ENCODE measurements at regions of chr12 and their contacts with region 1.

Region 1: GRCh38 chr12:12562585-12563261 is at the start of gene DUSP16:
- DNase-seq: peak; percentile 85
- H3K4me3 Mint-ChIP-seq: peak within 1 kb of the TSS; percentile 88
- H3K27ac Mint-ChIP-seq: peak within 1 kb of the TSS; percentile 97
- H3K4me1 Mint-ChIP-seq: peaks cover 52% of the 10 kb centered on the region
- H3K27me3 Mint-ChIP-seq: no peaks in the 10 kb centered on the region
- total RNA-seq, gene DUSP16: 49.3 and 52.0 TPM in 2 replicates

Region 2: GRCh38 chr12:12442548-12443071 is 120.1 kb before region 1 on chr12:
- intact Hi-C with region 1: loop called (anchors 1 kb)
- DNase-seq: no peak
- H3K4me3 Mint-ChIP-seq: peak overlapping the region; percentile 34
- H3K27ac Mint-ChIP-seq: peak overlapping the region; percentile 95
- H3K4me1 Mint-ChIP-seq: peaks cover 74% of the 10 kb centered on the region
- H3K27me3 Mint-ChIP-seq: no peaks in the 10 kb centered on the region

Region 3: DNA sequence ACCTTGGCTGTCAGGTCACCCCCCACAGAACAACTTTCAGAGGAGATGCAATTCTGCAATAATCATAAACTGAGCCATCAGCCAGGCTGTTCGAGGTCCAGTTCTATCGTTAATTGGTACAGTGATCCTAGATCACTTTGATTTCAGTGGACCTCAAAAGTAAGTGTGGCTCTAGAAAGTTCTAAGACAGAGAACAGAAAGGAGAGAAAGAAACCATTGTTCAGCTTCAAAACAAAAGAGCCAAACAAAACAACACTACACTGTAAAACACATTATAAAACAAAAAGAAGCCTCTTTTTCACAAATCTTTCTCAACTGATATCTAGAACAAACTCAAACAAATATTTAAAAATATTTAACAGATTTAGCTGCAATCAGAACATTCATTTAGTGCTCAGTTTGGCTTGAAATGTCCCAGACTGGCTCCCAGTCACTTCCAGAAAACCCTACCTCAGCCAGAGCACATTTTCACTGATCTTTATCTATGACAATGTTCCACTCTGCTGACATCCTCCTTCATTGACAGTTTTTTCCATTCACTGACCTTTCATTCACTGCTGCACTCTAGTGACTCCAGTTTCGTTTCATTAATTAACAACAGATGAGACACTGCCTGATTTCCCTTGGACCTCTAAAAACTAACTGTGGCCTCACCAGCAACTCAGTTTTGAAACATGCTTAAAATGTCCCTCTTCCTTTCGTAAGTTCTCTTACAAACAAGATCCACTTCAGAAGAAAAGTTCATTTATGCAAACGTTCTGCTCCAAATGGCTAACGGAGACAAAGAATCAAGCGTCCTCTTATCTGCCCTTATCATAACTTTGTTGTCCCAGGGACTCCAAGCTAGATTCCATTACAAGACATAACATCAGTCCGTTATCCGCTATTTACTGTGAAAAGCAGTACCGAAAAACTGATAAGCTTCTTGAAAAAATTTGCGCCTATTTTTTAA is 56.9 kb before region 1 on chr12:
- intact Hi-C with region 1: loop called (anchors 1 kb)
- DNase-seq: peak; percentile 17
- H3K4me3 Mint-ChIP-seq: peak overlapping the region; percentile 63
- H3K27ac Mint-ChIP-seq: peak overlapping the region; percentile 93
- H3K4me1 Mint-ChIP-seq: peaks cover 53% of the 10 kb centered on the region
- H3K27me3 Mint-ChIP-seq: no peaks in the 10 kb centered on the region

Region 4: DNA sequence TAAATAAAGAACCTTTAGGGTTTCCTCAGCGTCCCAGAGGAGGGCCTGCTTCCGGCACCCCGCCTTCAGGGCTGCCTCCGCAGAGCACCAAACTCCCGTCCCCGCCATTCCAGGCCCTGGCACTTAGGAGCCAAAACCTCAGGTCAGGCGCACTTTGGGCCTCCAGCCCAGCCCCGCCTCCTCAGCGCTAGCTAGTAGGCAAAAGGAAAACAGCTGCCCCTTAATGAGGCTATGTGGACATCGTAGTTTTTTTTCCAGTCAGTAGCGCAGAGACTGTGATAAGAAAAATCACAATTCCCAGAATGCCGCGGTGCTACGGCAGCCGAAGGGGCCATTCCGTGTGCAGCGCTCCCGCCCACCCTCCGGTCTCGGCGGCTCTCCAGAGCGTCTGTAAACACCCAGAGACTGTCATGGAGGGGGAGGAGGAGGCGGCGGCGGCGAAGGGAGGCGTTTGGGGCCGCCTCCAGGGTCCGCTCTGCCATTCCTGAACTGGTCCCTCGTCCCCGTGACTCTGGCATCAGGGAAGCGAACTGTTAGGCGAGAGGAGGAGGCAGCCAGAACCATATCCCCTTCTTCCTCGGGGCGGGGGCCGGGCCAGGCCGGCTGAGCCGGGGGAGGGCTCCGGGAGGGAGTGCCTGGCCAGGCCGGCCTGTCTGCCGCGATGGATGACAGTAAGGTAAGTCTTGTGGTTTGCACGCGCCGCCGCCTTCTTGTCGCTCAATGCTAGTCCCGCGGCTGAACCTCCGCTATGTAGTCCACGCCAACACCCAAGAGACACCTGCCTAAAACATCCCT is 49.0 kb after region 1 on chr12 and contains the start of gene CREBL2:
- intact Hi-C with region 1: loop called (anchors 1 kb)
- DNase-seq: peak; percentile 78
- H3K4me3 Mint-ChIP-seq: peak within 1 kb of the TSS; percentile 95
- H3K27ac Mint-ChIP-seq: peak within 1 kb of the TSS; percentile 96
- H3K4me1 Mint-ChIP-seq: peaks cover 47% of the 10 kb centered on the region
- H3K27me3 Mint-ChIP-seq: no peaks in the 10 kb centered on the region
- total RNA-seq, gene CREBL2: 16.7 and 17.9 TPM in 2 replicates

Region 5: DNA sequence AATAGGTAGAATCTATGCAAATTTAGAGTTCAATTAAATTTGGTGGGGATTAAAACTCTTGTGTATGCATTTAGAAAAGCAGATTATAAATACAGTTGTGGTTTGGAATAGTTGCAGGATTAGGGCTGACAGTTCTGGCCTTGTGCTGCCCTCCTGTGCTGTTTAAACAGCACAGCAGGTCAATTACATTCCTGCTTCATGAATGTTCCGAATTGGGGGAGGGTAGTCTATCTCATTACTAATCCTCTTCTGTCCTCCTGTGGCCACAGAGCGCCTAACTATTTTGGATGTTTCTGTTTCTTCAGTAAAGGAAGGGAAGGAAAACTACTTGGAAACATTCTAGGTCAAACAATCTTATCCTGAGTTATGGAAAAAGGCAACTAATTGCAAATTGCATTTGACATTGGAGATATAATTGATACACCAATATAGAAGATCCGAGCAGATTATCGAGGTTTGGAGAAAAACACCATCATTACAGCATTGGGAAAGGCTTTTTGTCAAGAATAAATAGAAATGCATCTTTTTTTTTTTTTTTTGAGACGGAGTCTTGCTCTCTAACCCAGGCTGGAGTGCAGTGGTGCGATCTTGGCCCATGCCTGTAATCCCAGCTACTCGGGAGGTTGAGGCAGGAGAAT is 142.0 kb after region 1 on chr12:
- intact Hi-C with region 1: loop called (anchors 1 kb)
- DNase-seq: no peak
- H3K4me3 Mint-ChIP-seq: peak overlapping the region; percentile 11
- H3K27ac Mint-ChIP-seq: peak overlapping the region; percentile 14
- H3K4me1 Mint-ChIP-seq: peaks cover 25% of the 10 kb centered on the region
- H3K27me3 Mint-ChIP-seq: no peaks in the 10 kb centered on the region

Measured in activated T-helper 1 cell treated with anti-CD3 and anti-CD28 coated beads, Interleukin-12 subunit alpha, Interleukin-12 subunit beta, Interleukin-2, Interleukin-4 antibody, amounts not matched to agents 30 ng/mL and 10 ng/mL and 1 ng/mL, durations not matched to agents 14 hours and 24 hours and 36 hours (primary cell).